A549 (cell line): ENCODE measurements at regions of chr16 and their contacts with region 1.

Region 1: GRCh38 chr16:361872-362701 is 8.3 kb downstream of the MRPL28 start:
- DNase-seq: peak; percentile 89 to 94
- ATAC-seq: peak; percentile 86 to 94
- H3K4me3 ChIP-seq: no peak overlapping the region
- H3K27ac ChIP-seq: 0 out of 6 replicates have a peak overlapping the region, but pooled peaks of 1 of the 2 experiments have one; percentile 49
- H3K4me1 ChIP-seq: peaks cover 7% of the 10 kb centered on the region; the same call in 2 of the 3 replicates
- CTCF ChIP-seq: peak; percentile 88
- EP300 ChIP-seq: no peak
- POLR2A ChIP-seq: no peak
- RAD21 ChIP-seq: peak; percentile 96 to 97

Region 2: DNA sequence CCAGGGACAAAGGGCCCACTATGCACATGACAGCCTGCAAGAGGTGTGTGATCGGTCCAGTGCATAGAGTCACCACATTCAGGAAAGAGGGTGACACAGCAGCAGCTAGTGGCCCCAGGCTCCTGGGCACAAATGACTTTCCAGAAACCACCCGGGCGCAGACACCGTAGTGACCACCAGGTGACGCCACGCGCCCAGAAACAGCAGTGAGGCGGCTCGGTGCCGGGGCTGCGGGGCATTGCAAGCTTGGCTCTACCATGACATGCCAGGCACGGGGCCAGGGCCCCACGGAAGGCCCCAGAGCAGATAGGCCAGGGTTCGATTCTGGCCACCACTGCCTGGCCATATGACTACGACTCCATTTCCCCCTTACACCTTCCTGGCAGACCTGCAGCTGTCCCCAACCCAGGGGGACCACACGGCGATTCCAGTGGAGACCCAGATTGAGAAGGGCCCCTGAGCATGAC is 296.4 kb before region 1 on chr16:
- CTCF ChIA-PET with region 1: interaction called, 80 read pairs
- POLR2A ChIA-PET with region 1: no interaction called
- DNase-seq: peak; percentile 79 to 90
- ATAC-seq: peak; percentile 76 to 89
- H3K4me3 ChIP-seq: no peak overlapping the region
- H3K27ac ChIP-seq: no peak overlapping the region
- H3K4me1 ChIP-seq: no peaks in the 10 kb centered on the region; the same call in 2 of the 3 replicates
- CTCF ChIP-seq: peak; percentile 92
- EP300 ChIP-seq: no peak
- POLR2A ChIP-seq: no peak
- RAD21 ChIP-seq: peak; percentile 97 to 98

Region 3: GRCh38 chr16:96935-97381 is 265.1 kb before region 1 on chr16:
- CTCF ChIA-PET with region 1: interaction called, 28 read pairs
- POLR2A ChIA-PET with region 1: no interaction called
- DNase-seq: peak; percentile 88 to 96
- ATAC-seq: peak; percentile 84 to 88
- H3K4me3 ChIP-seq: no peak overlapping the region
- H3K27ac ChIP-seq: no peak overlapping the region
- H3K4me1 ChIP-seq: peaks cover 10% of the 10 kb centered on the region
- CTCF ChIP-seq: peak; percentile 100
- EP300 ChIP-seq: no peak
- POLR2A ChIP-seq: no peak
- RAD21 ChIP-seq: peak; percentile 71 to 72

Region 4: DNA sequence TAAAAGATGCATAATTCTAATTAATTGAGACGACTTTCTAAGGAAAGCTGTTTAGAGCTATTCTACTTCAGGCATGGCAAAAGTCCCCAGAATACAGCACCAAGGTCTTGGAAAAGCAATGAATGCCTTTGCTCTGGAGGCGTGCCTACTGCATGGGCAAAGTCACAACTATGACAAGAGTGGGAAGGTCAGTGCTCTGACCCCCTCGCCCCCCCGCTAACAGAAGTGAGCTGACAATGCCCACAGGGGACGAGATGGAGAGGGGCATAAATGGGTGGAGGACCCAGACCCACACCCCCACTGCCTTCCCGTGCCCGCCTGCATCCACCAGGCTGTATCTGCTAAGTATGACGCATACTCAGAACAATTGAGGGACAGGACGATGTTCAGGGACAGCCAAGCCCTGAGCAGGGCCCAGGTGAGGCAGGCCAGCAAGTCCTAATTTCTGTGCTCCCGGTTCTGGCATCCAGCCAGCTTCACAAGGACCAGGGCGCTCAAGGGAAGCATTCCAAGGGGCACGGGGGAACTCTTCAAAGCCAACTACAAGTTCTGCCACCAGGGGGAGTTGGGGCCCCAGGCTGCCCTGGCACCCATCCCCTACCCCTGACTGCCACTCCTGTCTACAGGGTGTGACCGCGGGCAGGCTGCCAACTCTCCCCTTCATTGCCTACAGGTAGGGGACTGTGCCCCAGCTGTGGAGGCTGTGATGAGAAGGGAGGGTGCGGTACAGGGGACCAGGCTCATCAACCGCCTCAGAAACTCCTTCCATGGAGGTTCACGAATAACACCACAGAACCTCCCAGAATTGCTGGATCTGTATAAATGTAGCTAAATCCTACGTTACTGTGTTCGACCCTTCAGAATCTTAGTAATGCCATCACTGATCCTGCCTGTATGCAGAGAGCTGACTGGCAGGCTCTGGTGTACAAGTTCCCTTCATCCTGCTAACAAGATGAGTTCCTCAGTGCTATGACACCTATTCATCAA is 244.4 kb before region 1 on chr16:
- CTCF ChIA-PET with region 1: interaction called, 52 read pairs
- POLR2A ChIA-PET with region 1: no interaction called
- DNase-seq: peak; percentile 70 to 74
- ATAC-seq: peak; percentile 81 to 92; a peak in 5 of 6 replicates
- H3K4me3 ChIP-seq: no peak overlapping the region
- H3K27ac ChIP-seq: peak overlapping the region in 1 of 2 experiments; percentile 13; a peak in 1 of 6 replicates
- H3K4me1 ChIP-seq: peaks cover 29% of the 10 kb centered on the region
- CTCF ChIP-seq: peak; percentile 65
- EP300 ChIP-seq: no peak
- POLR2A ChIP-seq: no peak
- RAD21 ChIP-seq: peak; percentile 57 to 58

Region 5: GRCh38 chr16:180938-181667 is 181.0 kb before region 1 on chr16:
- CTCF ChIA-PET with region 1: interaction called, 16 read pairs
- POLR2A ChIA-PET with region 1: no interaction called
- DNase-seq: peak; percentile 88
- ATAC-seq: peak; percentile 71 to 78
- H3K4me3 ChIP-seq: peak overlapping the region; percentile 48
- H3K27ac ChIP-seq: peak overlapping the region; percentile 56 to 82; a peak in 5 of 6 replicates
- H3K4me1 ChIP-seq: peaks cover 9% of the 10 kb centered on the region; the same call in 1 of the 3 replicates
- CTCF ChIP-seq: peak; percentile 90
- EP300 ChIP-seq: no peak
- POLR2A ChIP-seq: no peak
- RAD21 ChIP-seq: peak; percentile 60 to 83

Region 6: GRCh38 chr16:234468-235305 is 127.4 kb before region 1 on chr16 and contains the start of gene FAM234A:
- CTCF ChIA-PET with region 1: interaction called, 20 read pairs
- POLR2A ChIA-PET with region 1: interaction called, 7 read pairs
- DNase-seq: peak; percentile 91 to 95
- ATAC-seq: peak; percentile 88 to 91
- H3K4me3 ChIP-seq: peak within 1 kb of the TSS; percentile 78
- H3K27ac ChIP-seq: peak within 1 kb of the TSS; percentile 93 to 96
- H3K4me1 ChIP-seq: 0 out of 3 replicates have a peak, but pooled peaks cover 2% of the 10 kb centered on the region
- CTCF ChIP-seq: peak; percentile 57
- EP300 ChIP-seq: no peak
- POLR2A ChIP-seq: peak; percentile 74
- RAD21 ChIP-seq: 0 out of 5 replicates have a peak, but pooled peaks of 1 of the 2 experiments have one; percentile 41
- polyA plus RNA-seq, gene FAM234A: 25.6 and 27.4 TPM in 2 replicates